ENCODE measurements at regions of chr2 and their contacts with region 1.

Region 1: DNA sequence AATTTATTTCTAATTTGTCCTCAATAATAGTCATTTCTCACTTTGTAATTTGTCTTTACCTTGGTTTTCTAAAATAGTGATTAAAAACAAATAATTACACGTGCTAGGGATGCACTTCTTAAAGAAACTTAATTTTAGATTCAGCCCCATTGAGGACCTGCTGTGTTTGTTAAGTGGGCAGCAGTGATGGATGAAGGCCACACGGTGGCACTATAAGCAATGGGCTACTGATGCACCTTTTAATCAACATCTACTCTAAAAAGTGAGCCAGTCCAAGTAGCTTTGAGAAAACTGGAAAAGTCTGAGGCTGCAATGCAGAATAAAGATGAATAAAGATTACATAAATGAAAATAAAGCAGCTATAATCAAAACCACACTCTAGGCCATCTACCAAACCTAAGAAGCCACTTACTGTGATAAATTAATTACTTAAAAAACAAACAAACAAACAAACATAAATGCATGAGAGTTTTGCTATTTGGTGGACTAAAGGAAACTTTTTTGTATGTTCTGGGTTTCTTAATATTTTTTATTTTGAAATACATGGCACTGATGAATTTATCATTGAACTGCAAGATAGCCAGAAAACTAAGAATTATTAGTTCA is 89.3 kb downstream of the PDE11A start:
- DNase-seq: peak; percentile 68 to 76 (median 71)
- ATAC-seq: peak; percentile 96
- H3K4me3 ChIP-seq: no peak overlapping the region
- H3K27ac ChIP-seq: no peak overlapping the region
- H3K4me1 ChIP-seq: no peaks in the 10 kb centered on the region
- H3K27me3 ChIP-seq: no peaks in the 10 kb centered on the region
- CTCF ChIP-seq: peak; percentile 80 to 90 (median 89)
- EP300 ChIP-seq: no peak
- POLR2A ChIP-seq: no peak
- RAD21 ChIP-seq: peak; percentile 87 to 88

Region 2: DNA sequence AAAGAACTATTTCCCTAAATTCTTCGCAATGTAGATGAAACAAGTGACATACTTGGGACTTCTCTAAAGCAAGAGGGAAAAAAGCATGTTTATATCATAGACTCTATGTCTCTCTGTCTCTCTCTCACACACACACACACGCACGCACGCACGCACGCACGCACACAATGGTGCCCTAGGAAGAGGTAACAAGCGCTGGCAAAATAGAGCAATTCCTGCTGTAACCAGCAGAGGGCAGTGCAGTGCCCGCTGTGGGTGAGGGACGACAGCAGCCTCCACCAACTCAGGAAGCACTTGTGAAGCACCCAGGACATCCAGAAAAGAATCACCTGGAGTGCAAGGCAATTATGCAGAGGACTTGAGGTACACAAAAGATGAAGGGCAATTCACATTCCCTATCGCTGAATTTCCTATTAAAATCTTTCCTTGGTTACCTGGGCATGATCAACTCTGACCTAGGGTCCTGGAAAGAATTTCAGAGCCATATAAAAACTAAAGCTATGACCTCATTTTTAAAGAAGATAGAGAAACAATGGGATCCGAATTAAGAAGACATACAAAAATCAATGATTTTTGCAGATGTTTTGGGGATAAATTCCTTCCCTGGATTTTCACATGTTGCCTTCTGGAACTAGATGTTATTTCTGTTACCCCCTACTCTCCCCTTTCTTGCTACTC is 77.1 kb before region 1 on chr2:
- CTCF ChIA-PET with region 1: no interaction called
- POLR2A ChIA-PET with region 1: no interaction called
- in situ Hi-C with region 1: no loop called
- intact Hi-C with region 1: loop called (anchors 5 kb)
- DNase-seq: peak; percentile 73 to 83 (median 77)
- ATAC-seq: peak; percentile 99
- H3K4me3 ChIP-seq: no peak overlapping the region
- H3K27ac ChIP-seq: no peak overlapping the region
- H3K4me1 ChIP-seq: no peaks in the 10 kb centered on the region; a peak in 1 of 5 replicates
- H3K27me3 ChIP-seq: no peaks in the 10 kb centered on the region
- CTCF ChIP-seq: peak; percentile 85 to 98 (median 89)
- EP300 ChIP-seq: no peak
- POLR2A ChIP-seq: no peak
- RAD21 ChIP-seq: peak; percentile 65 to 75

Region 3: DNA sequence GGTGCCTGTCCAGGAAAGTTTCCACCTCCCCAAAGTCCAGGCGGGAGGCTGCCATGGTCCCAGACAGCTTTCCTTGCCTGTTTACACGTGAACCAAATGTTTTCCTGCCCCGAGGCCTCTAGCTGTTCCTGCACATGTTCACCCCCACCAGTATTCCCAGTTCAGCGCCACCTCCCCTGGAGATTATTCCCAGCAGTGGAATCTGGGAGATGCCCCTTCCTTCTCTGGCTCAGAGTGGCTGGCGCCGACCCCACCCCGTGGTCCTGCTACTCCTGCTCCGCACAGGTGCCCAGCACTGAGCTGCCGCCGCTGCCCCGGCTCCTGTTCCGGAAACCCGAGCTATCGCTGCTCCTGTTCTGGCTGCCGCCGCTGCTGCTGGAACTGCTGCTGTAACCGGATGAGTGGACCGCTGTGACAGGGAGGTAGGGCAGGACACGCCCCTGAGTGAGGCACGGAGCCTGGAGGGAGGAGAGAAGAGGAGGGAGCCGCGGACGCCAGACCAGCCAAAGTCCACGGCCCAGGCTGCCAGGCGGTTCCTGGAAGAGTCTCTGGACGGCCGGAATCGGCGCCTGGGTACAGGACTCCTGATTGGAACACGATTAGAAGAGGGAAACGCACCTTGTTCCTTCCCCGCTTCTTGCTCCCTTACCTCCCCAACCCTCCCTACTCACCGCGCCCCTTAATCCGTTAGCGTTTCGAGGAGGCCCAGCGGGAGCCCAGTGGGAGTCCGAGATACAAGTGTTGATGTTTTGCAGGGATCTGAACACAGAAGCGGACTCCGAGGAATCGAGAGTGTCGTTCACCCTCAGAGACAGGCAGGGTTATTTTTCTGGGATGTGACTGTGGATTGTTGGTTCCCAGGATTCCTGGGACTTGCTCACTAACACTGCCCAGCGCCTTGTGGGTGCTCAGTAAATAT is 89.4 kb after region 1 on chr2 and contains the start of gene PDE11A:
- CTCF ChIA-PET with region 1: no interaction called
- POLR2A ChIA-PET with region 1: no interaction called
- in situ Hi-C with region 1: no loop called
- intact Hi-C with region 1: loop called (anchors 1 kb)
- DNase-seq: peak; percentile 82 to 96 (median 86)
- ATAC-seq: peak; percentile 98
- H3K4me3 ChIP-seq: peak within 1 kb of the TSS; percentile 42
- H3K27ac ChIP-seq: peak within 1 kb of the TSS; percentile 51
- H3K4me1 ChIP-seq: peaks cover 27 to 55% of the 10 kb centered on the region in 2 experiments
- H3K27me3 ChIP-seq: no peaks in the 10 kb centered on the region
- CTCF ChIP-seq: no peak
- EP300 ChIP-seq: no peak
- POLR2A ChIP-seq: peak; percentile 87
- RAD21 ChIP-seq: no peak
- polyA plus RNA-seq, gene PDE11A: 3.2 to 3.9 TPM

Region 4: GRCh38 chr2:178112202-178113152 is 129.2 kb after region 1 on chr2 and contains the start of gene RBM45:
- CTCF ChIA-PET with region 1: no interaction called
- POLR2A ChIA-PET with region 1: interaction called, 3 read pairs
- in situ Hi-C with region 1: no loop called
- intact Hi-C with region 1: loop called (anchors 5 kb)
- DNase-seq: peak; percentile 95 to 96 (median 95)
- ATAC-seq: peak; percentile 97
- H3K4me3 ChIP-seq: peak within 1 kb of the TSS; percentile 66
- H3K27ac ChIP-seq: peak within 1 kb of the TSS; percentile 54; the same call in 2 of the 3 replicates
- H3K4me1 ChIP-seq: peaks cover 10 to 16% of the 10 kb centered on the region in 2 experiments; a peak in 3 of 5 replicates
- H3K27me3 ChIP-seq: no peaks in the 10 kb centered on the region; a peak in 1 of 5 replicates
- CTCF ChIP-seq: peak; percentile 97 to 99 (median 98)
- EP300 ChIP-seq: peak; percentile 61
- POLR2A ChIP-seq: peak; percentile 93
- RAD21 ChIP-seq: peak; percentile 79 to 86
- polyA plus RNA-seq, gene RBM45: 6.7 to 9.9 TPM

Region 5: DNA sequence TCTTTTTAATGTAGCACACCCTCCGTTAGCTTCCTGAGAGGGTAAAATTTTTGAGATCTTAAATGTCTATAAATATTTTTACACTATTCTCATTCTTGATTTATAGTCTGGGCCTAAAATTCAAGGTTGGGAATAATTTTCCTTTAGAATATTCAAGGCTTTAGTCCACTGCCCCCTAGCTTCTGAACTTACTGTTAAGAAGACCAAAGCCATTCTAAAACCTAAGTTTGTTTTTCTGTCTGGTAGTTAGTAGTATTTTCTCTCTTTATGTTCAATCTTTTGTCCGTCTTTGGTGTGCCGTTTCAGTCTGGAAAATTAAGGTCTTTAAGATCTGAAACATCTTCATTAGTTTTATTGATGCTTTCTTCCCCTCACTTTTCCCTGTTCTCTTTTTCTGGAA is 225.5 kb after region 1 on chr2:
- CTCF ChIA-PET with region 1: interaction called, 3 read pairs
- POLR2A ChIA-PET with region 1: no interaction called
- in situ Hi-C with region 1: no loop called
- intact Hi-C with region 1: loop called (anchors 5 kb)
- DNase-seq: peak in 1 of 4 experiments; percentile 26
- ATAC-seq: no peak
- H3K4me3 ChIP-seq: no peak overlapping the region
- H3K27ac ChIP-seq: no peak overlapping the region
- H3K4me1 ChIP-seq: peaks cover 3 to 12% of the 10 kb centered on the region in 2 experiments; a peak in 3 of 5 replicates
- H3K27me3 ChIP-seq: no peaks in the 10 kb centered on the region; a peak in 1 of 5 replicates
- CTCF ChIP-seq: peak in 2 of 3 experiments; percentile 43 to 59; a peak in 4 of 6 replicates
- EP300 ChIP-seq: no peak
- POLR2A ChIP-seq: no peak
- RAD21 ChIP-seq: peak in 1 of 2 experiments; percentile 60; a peak in 3 of 4 replicates

Region 6: DNA sequence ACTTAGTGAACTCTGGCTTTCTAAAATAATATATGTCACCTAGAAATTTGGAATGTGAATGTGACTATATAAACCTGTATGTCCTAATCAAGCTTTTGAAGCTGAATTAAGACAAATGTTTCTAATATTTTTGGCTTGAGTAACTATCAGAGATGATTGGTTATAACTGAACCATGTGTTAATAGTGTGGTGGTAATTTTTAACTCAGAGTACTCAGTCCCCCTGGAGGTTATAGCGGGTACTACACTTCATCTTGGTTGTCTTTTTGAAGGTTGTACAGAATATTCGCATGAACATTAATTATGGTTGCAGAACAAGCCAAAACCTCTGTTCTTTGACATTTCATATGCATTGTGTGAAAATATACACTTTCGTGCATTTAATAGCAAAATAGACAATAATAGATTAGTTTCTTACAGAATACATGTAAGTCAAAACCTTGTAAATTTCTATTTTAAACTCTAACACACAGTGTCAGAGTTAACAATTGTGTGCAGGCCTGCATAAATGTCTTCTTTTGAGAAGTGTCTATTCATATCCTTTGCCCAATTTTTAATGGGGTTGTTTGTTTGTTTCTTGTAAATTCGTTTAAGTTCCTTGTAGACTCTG is 297.1 kb after region 1 on chr2:
- CTCF ChIA-PET with region 1: no interaction called
- POLR2A ChIA-PET with region 1: no interaction called
- in situ Hi-C with region 1: no loop called
- intact Hi-C with region 1: loop called (anchors 10 kb)
- DNase-seq: peak; percentile 62 to 73 (median 70)
- ATAC-seq: peak; percentile 55
- H3K4me3 ChIP-seq: no peak overlapping the region
- H3K27ac ChIP-seq: no peak overlapping the region
- H3K4me1 ChIP-seq: peaks cover 9 to 48% of the 10 kb centered on the region in 2 experiments
- H3K27me3 ChIP-seq: no peaks in the 10 kb centered on the region
- CTCF ChIP-seq: peak; percentile 55 to 74 (median 64); a peak in 5 of 6 replicates
- EP300 ChIP-seq: no peak
- POLR2A ChIP-seq: no peak
- RAD21 ChIP-seq: peak; percentile 26 to 74; a peak in 2 of 4 replicates

Measured in K562 (cell line).